ENCODE measurements at regions of chr4 and their contacts with region 1.

Region 1: DNA sequence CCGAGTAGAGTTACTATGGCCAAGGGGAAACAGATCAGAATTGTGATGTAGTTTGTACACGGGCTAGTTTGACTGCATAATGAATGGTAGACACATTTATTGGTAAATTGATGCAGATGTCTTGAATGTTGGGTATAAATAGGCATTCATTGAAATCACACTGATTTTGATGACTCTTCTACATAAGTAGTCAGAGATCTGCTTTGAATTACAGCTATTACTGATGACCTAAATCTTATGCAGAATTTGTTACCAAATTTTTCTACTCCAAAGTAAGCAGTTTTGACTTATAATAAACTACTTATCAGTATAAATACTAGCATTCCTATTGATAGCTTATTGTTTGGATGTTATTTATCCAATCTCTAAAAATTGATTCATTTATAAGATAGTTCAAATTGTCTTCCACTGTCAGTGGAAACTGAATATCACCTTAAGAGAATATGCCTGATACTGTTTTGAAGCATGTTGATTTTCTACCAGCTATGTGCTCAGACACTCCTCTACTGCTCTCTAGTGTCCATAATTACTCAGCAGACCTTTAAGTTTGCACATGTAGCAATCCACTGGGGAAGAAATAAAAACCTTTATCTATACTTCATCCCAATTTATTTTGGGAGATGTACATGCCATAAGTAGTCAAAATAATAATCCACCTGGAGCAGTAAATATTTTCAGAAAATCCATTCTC is 120.3 kb downstream of the RASL11B start:
- DNase-seq: peak; percentile 44

Region 2: GRCh38 chr4:52545099-52546069 is 437.0 kb before region 1 on chr4:
- CTCF ChIA-PET with region 1: interaction called, 10 read pairs
- POLR2A ChIA-PET with region 1: no interaction called
- DNase-seq: peak; percentile 81

Region 3: GRCh38 chr4:52701207-52701606 is 281.2 kb before region 1 on chr4:
- CTCF ChIA-PET with region 1: no interaction called
- POLR2A ChIA-PET with region 1: no interaction called
- DNase-seq: no peak